MCF 10A (cell line): ENCODE measurements at regions of chr2 and their contacts with region 1.

Region 1: GRCh38 chr2:61538200-61538919 is at the start of gene XPO1:
- DNase-seq: peak; percentile 100
- H3K4me3 Mint-ChIP-seq: peak within 1 kb of the TSS; percentile 88
- H3K27ac Mint-ChIP-seq: peak within 1 kb of the TSS; percentile 97
- H3K4me1 Mint-ChIP-seq: peaks cover 5% of the 10 kb centered on the region
- H3K27me3 Mint-ChIP-seq: no peaks in the 10 kb centered on the region
- CTCF ChIP-seq: no peak
- total RNA-seq, gene XPO1: 131 and 148 TPM in 2 replicates

Region 2: DNA sequence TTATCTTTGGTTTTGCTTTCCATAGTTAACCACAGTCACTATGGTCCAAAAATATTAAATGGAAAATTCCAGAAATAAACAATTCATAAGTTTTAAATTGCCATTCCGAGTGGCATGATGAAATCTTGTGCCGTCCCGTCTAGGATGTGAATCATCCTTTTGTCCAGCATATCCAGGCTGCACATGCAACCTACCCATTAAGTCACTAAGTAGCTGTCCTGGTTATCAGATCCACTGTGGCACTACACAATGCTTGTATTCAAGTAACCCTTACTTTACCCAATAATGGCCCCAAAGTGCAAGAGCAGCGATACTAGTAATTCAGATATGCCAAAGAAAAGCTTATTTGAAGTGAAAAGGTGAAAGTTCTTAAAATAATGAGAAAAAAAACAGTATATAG is 78.2 kb before region 1 on chr2:
- CTCF ChIA-PET with region 1: no interaction called
- POLR2A ChIA-PET with region 1: interaction called, 10 read pairs
- intact Hi-C with region 1: no loop called
- DNase-seq: peak; percentile 79
- H3K4me3 Mint-ChIP-seq: no peak overlapping the region
- H3K27ac Mint-ChIP-seq: peak overlapping the region; percentile 70
- H3K4me1 Mint-ChIP-seq: peaks cover 7% of the 10 kb centered on the region
- H3K27me3 Mint-ChIP-seq: no peaks in the 10 kb centered on the region
- CTCF ChIP-seq: no peak

Region 3: DNA sequence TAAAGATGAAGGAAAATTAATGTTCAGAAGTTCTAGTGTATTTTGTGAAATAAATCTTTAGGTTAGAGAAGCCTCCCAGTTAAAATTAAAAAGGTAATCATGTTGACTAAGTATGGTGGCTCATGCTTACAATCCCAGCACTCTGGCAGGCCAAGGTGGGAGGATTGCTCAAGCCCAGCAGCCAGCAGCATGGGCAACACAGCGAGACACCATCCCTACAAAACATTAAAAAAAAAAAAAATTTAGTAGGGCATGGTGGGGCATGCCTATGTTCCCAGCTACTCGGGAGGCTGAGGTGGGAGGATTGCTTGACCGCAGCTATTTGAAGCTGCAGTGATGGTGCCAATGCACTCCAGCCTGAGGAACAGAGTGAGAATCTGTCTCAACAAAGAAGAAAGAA is 18.1 kb before region 1 on chr2:
- CTCF ChIA-PET with region 1: interaction called, 7 read pairs
- POLR2A ChIA-PET with region 1: interaction called, 112 read pairs
- intact Hi-C with region 1: no loop called
- DNase-seq: peak; percentile 56
- H3K4me3 Mint-ChIP-seq: no peak overlapping the region
- H3K27ac Mint-ChIP-seq: peak overlapping the region; percentile 25
- H3K4me1 Mint-ChIP-seq: peaks cover 15% of the 10 kb centered on the region
- H3K27me3 Mint-ChIP-seq: no peaks in the 10 kb centered on the region
- CTCF ChIP-seq: no peak

Region 4: GRCh38 chr2:61620244-61621159 is 82.1 kb after region 1 on chr2:
- CTCF ChIA-PET with region 1: no interaction called
- POLR2A ChIA-PET with region 1: interaction called, 15 read pairs
- intact Hi-C with region 1: no loop called
- DNase-seq: peak; percentile 86
- H3K4me3 Mint-ChIP-seq: no peak overlapping the region
- H3K27ac Mint-ChIP-seq: peak overlapping the region; percentile 25
- H3K4me1 Mint-ChIP-seq: peaks cover 9% of the 10 kb centered on the region
- H3K27me3 Mint-ChIP-seq: no peaks in the 10 kb centered on the region
- CTCF ChIP-seq: no peak

Region 5: DNA sequence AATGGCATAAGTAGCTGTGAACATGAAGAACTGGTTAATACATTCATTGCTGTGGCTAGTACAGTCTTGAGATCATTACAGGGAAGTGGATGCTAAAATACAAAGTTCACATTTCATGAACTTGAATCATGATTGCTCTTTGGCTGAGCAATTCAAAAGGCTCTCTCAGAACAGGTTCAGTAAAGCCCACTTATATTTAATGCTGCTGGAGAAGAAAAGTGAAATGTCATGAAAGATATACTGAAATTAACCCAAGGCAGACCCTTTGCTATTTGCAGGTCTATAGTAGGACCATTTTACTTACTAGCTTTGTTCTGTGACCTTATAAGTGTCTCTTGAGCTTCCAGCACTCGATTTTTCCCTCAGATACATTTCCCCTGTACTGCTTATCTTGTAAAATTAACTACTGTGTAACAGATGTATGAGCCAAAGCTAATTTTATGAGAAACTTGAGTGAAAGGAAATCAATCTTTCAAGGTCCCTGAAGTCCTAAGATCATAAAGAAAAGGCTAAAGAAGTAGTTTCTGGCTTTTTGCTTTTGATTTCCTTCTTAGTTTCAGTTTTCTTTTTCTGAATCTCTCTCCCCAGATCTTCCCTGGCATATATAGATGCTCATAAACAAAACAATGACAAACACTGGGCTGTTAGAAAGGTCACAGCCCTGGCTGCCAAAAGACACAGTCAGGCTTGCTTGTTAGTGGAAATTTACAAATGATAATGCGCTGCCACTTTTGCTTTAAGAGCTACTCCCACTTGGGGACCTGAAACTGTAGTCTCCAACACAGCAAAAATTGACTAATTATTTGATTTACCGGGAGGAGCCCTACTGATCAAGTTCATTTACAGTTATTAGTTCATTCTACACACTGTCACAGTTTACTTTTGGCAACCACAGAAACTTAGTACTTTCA is 132.5 kb after region 1 on chr2:
- CTCF ChIA-PET with region 1: no interaction called
- POLR2A ChIA-PET with region 1: interaction called, 10 read pairs
- intact Hi-C with region 1: no loop called
- DNase-seq: peak; percentile 26
- H3K4me3 Mint-ChIP-seq: peak overlapping the region; percentile 42
- H3K27ac Mint-ChIP-seq: peak overlapping the region; percentile 76
- H3K4me1 Mint-ChIP-seq: peaks cover 10% of the 10 kb centered on the region
- H3K27me3 Mint-ChIP-seq: no peaks in the 10 kb centered on the region
- CTCF ChIP-seq: no peak

Region 6: GRCh38 chr2:61898810-61899209 is 360.4 kb after region 1 on chr2:
- CTCF ChIA-PET with region 1: no interaction called
- POLR2A ChIA-PET with region 1: no interaction called
- intact Hi-C with region 1: loop called (anchors 10 kb)
- DNase-seq: peak; percentile 29
- H3K4me3 Mint-ChIP-seq: no peak overlapping the region
- H3K27ac Mint-ChIP-seq: no peak overlapping the region
- H3K4me1 Mint-ChIP-seq: no peaks in the 10 kb centered on the region
- H3K27me3 Mint-ChIP-seq: no peaks in the 10 kb centered on the region
- CTCF ChIP-seq: peak; percentile 37